Naive thymus-derived CD4-positive, alpha-beta T cell (primary cell): ENCODE measurements at regions of chr11 and their contacts with region 1.

Region 1: GRCh38 chr11:93512073-93512475 is 31.1 kb downstream of the SMCO4 start:
- DNase-seq: no peak
- ATAC-seq: no peak
- H3K4me3 ChIP-seq: no peak overlapping the region
- H3K4me3 Mint-ChIP-seq: peak overlapping the region in 1 of 10 donors; percentile 55
- H3K27ac ChIP-seq: no peak overlapping the region
- H3K27ac Mint-ChIP-seq: peak overlapping the region in 1 of 9 donors; percentile 83
- H3K4me1 ChIP-seq: no peaks in the 10 kb centered on the region
- H3K4me1 Mint-ChIP-seq: peaks cover 0 to 31% (median 0%) of the 10 kb centered on the region in 7 donors
- H3K27me3 ChIP-seq: no peaks in the 10 kb centered on the region
- H3K27me3 Mint-ChIP-seq: no peaks in the 10 kb centered on the region

Region 2: DNA sequence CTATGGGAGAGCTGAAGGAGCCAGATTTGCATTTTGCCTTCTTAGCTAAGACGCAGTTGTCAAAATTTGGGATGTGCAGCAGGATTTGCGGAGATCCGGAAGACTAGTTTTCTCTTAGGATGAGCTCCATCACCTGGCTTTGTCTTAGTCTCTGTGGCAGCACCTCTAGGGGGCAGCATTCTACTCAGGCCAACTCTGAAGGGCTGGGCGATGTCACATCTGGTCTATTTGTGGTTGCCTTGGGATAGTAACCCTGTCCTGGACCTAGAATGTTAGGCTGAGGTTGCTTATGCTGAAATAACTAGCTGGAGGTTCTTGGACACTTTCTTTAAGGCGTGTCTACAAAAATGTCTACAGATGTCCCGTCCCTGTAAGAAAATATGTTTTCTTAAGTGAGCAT is 1171.2 kb before region 1 on chr11:
- CTCF ChIA-PET with region 1: no interaction called
- POLR2A ChIA-PET with region 1: no interaction called
- intact Hi-C with region 1: no loop called
- DNase-seq: no peak
- ATAC-seq: no peak
- H3K4me3 ChIP-seq: no peak overlapping the region
- H3K4me3 Mint-ChIP-seq: no peak overlapping the region
- H3K27ac ChIP-seq: no peak overlapping the region
- H3K27ac Mint-ChIP-seq: no peak overlapping the region
- H3K4me1 ChIP-seq: no peaks in the 10 kb centered on the region
- H3K4me1 Mint-ChIP-seq: no peaks in the 10 kb centered on the region
- H3K27me3 ChIP-seq: no peaks in the 10 kb centered on the region
- H3K27me3 Mint-ChIP-seq: peaks cover 0 to 4% (median 0%) of the 10 kb centered on the region in 5 donors

Region 3: GRCh38 chr11:93487032-93487483 is 25.0 kb before region 1 on chr11:
- CTCF ChIA-PET with region 1: no interaction called
- POLR2A ChIA-PET with region 1: no interaction called
- intact Hi-C with region 1: no loop called
- DNase-seq: no peak
- ATAC-seq: no peak
- H3K4me3 ChIP-seq: no peak overlapping the region
- H3K4me3 Mint-ChIP-seq: no peak overlapping the region
- H3K27ac ChIP-seq: no peak overlapping the region
- H3K27ac Mint-ChIP-seq: no peak overlapping the region
- H3K4me1 ChIP-seq: no peaks in the 10 kb centered on the region
- H3K4me1 Mint-ChIP-seq: no peaks in the 10 kb centered on the region
- H3K27me3 ChIP-seq: no peaks in the 10 kb centered on the region
- H3K27me3 Mint-ChIP-seq: no peaks in the 10 kb centered on the region

Region 4: GRCh38 chr11:93498641-93499040 is 13.4 kb before region 1 on chr11:
- CTCF ChIA-PET with region 1: no interaction called
- POLR2A ChIA-PET with region 1: no interaction called
- intact Hi-C with region 1: no loop called
- DNase-seq: no peak
- ATAC-seq: no peak
- H3K4me3 ChIP-seq: no peak overlapping the region
- H3K4me3 Mint-ChIP-seq: no peak overlapping the region
- H3K27ac ChIP-seq: no peak overlapping the region
- H3K27ac Mint-ChIP-seq: no peak overlapping the region
- H3K4me1 ChIP-seq: no peaks in the 10 kb centered on the region
- H3K4me1 Mint-ChIP-seq: peaks cover 0 to 3% (median 0%) of the 10 kb centered on the region in 7 donors
- H3K27me3 ChIP-seq: no peaks in the 10 kb centered on the region
- H3K27me3 Mint-ChIP-seq: no peaks in the 10 kb centered on the region

Region 5: DNA sequence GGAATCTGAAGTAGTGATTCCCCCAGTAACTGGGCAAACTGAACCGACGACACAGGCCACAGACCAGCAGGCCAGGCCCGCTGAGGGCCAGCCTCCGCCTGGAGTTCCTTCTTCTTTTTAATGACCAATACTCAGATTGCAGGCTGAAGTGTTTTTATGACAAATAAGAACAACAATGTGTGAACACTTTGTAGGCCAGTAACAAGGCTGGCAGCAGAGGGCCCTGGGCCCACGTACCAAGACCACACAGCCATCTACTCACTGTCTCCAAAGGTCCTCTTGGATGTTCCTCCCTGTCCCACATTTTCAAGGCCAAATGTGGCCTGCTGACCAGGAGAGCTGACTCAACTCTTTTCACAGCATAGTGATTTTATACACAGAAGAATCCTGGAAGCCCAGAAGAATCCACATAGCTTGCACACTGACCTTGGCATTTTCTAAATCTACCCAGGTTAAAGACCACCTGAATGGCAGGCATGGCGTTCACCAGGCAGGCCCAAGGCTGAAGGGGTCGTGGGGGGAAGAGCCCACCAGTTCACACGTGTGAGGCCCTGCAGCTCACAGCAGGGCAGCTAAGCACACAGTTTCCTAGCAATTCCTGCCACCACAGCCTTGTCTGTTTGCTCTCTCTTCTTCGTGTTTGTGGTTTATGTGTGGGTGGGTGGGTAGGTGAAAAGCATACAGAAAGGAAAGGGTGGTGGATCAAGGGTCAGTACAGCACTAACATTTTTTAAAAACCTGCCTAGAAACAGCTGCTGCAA is 17.8 kb after region 1 on chr11:
- CTCF ChIA-PET with region 1: no interaction called
- POLR2A ChIA-PET with region 1: no interaction called
- intact Hi-C with region 1: loop called in 1 of 2 experiments (anchors 2 kb)
- DNase-seq: no peak
- ATAC-seq: peak; percentile 52
- H3K4me3 ChIP-seq: no peak overlapping the region
- H3K4me3 Mint-ChIP-seq: peak overlapping the region in 2 of 10 donors; percentile 22 to 66
- H3K27ac ChIP-seq: no peak overlapping the region
- H3K27ac Mint-ChIP-seq: peak overlapping the region in 4 of 9 donors; percentile 38 to 77 (median 74)
- H3K4me1 ChIP-seq: no peaks in the 10 kb centered on the region
- H3K4me1 Mint-ChIP-seq: peaks cover 7 to 78% (median 26%) of the 10 kb centered on the region in 7 donors
- H3K27me3 ChIP-seq: no peaks in the 10 kb centered on the region
- H3K27me3 Mint-ChIP-seq: no peaks in the 10 kb centered on the region